Naive thymus-derived CD4-positive, alpha-beta T cell (primary cell): ENCODE measurements at regions of chr2 and their contacts with region 1.

Region 1: GRCh38 chr2:85354286-85355072 is at the starts of genes ELMOD3 and RETSAT:
- DNase-seq: peak; percentile 79 to 99 (median 98)
- ATAC-seq: peak; percentile 99
- H3K4me3 ChIP-seq: peak within 1 kb of the TSS; percentile 86
- H3K4me3 Mint-ChIP-seq: peak within 1 kb of the TSS; percentile 91 to 100 (median 100)
- H3K27ac ChIP-seq: peak within 1 kb of the TSS; percentile 89
- H3K27ac Mint-ChIP-seq: peak within 1 kb of the TSS; percentile 93 to 100 (median 99)
- H3K4me1 ChIP-seq: peaks cover 19 to 28% of the 10 kb centered on the region in 2 donors
- H3K4me1 Mint-ChIP-seq: peaks cover 36 to 61% (median 53%) of the 10 kb centered on the region in 7 donors
- H3K27me3 ChIP-seq: no peaks in the 10 kb centered on the region
- H3K27me3 Mint-ChIP-seq: no peaks in the 10 kb centered on the region
- total RNA-seq, gene ELMOD3: 20.2 to 33.3 (median 21.7) TPM
- total RNA-seq, gene RETSAT: 18.5 to 30.5 (median 20.2) TPM

Region 2: GRCh38 chr2:84459018-84459943 is 895.2 kb before region 1 on chr2 and contains the start of gene SUCLG1:
- CTCF ChIA-PET with region 1: no interaction called
- POLR2A ChIA-PET with region 1: no interaction called
- intact Hi-C with region 1: loop called in 1 of 2 experiments (anchors 1 kb)
- DNase-seq: peak; percentile 72 to 88 (median 84)
- ATAC-seq: peak; percentile 98
- H3K4me3 ChIP-seq: peak within 1 kb of the TSS; percentile 69
- H3K4me3 Mint-ChIP-seq: peak within 1 kb of the TSS; percentile 90 to 100 (median 96)
- H3K27ac ChIP-seq: peak within 1 kb of the TSS; percentile 94
- H3K27ac Mint-ChIP-seq: peak within 1 kb of the TSS; percentile 91 to 99 (median 99)
- H3K4me1 ChIP-seq: peaks cover 9 to 24% of the 10 kb centered on the region in 2 donors
- H3K4me1 Mint-ChIP-seq: peaks cover 33 to 56% (median 50%) of the 10 kb centered on the region in 7 donors
- H3K27me3 ChIP-seq: no peaks in the 10 kb centered on the region
- H3K27me3 Mint-ChIP-seq: no peaks in the 10 kb centered on the region
- total RNA-seq, gene SUCLG1: 45.1 to 63.6 (median 47.9) TPM

Region 3: GRCh38 chr2:85318222-85319074 is 36.0 kb before region 1 on chr2:
- CTCF ChIA-PET with region 1: no interaction called
- POLR2A ChIA-PET with region 1: interaction called, 211 read pairs
- intact Hi-C with region 1: no loop called
- DNase-seq: peak in 2 of 9 donors; percentile 33 to 37
- ATAC-seq: peak; percentile 64
- H3K4me3 ChIP-seq: no peak overlapping the region
- H3K4me3 Mint-ChIP-seq: peak overlapping the region; percentile 13 to 100 (median 60)
- H3K27ac ChIP-seq: peak overlapping the region; percentile 40
- H3K27ac Mint-ChIP-seq: peak overlapping the region in 8 of 9 donors; percentile 61 to 100 (median 90)
- H3K4me1 ChIP-seq: peaks cover 51 to 54% of the 10 kb centered on the region in 2 donors
- H3K4me1 Mint-ChIP-seq: peaks cover 53 to 66% (median 61%) of the 10 kb centered on the region in 7 donors
- H3K27me3 ChIP-seq: no peaks in the 10 kb centered on the region
- H3K27me3 Mint-ChIP-seq: no peaks in the 10 kb centered on the region

Region 4: GRCh38 chr2:85409845-85410583 is 55.5 kb after region 1 on chr2 and contains the start of gene CAPG:
- CTCF ChIA-PET with region 1: no interaction called
- POLR2A ChIA-PET with region 1: interaction called, 4 read pairs
- intact Hi-C with region 1: loop called in 1 of 2 experiments (anchors 1 kb)
- DNase-seq: peak in 3 of 9 donors; percentile 27 to 59 (median 29)
- ATAC-seq: peak; percentile 60
- H3K4me3 ChIP-seq: peak within 1 kb of the TSS; percentile 63
- H3K4me3 Mint-ChIP-seq: peak within 1 kb of the TSS; percentile 66 to 94 (median 78)
- H3K27ac ChIP-seq: peak within 1 kb of the TSS; percentile 41
- H3K27ac Mint-ChIP-seq: peak within 1 kb of the TSS; percentile 33 to 81 (median 76)
- H3K4me1 ChIP-seq: peaks cover 30 to 55% of the 10 kb centered on the region in 2 donors
- H3K4me1 Mint-ChIP-seq: peaks cover 32 to 78% (median 56%) of the 10 kb centered on the region in 7 donors
- H3K27me3 ChIP-seq: no peaks in the 10 kb centered on the region
- H3K27me3 Mint-ChIP-seq: peaks cover 0 to 15% (median 0%) of the 10 kb centered on the region in 5 donors
- total RNA-seq, gene CAPG: 12.9 to 265 (median 29.7) TPM

Region 5: DNA sequence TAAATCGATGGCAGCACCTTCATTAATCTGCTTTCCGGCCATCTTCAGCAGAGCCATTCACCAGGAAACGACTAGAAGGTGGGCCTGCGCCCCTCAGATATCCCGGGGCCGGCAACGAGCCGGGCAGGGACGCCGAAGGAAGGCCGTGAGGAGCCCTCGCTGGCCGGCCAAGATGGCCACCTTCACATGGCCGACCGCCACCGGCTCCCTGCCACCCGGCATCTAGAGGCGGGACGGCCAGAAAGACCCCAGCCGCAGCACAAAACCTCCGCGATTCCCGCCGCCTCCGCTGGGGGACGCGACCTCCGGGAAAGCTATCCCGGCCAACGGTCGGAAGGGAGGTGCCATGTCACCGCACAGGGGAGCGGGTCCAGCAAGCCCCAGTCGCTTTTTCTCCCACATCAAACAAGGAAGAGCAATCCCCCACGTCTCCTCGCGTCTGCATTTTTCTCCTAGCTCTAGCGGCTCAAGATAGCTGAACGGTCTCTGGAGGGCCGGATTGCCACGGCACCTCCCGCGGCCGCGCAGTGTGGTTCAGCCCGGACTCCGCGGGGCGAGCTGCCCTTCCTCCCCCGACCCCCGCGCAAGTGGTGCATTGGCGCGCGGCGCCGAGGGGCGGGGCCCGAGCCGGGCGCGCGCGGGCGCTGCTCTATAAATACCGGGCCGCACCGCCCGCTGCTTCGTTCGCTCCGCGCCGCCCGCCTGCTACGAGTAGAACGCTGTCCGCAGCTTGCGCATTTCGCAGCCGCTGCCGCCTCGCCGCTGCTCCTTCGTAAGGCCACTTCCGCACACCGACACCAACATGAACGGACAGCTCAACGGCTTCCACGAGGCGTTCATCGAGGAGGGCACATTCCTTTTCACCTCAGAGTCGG is 184.2 kb after region 1 on chr2 and contains the start of gene MAT2A:
- CTCF ChIA-PET with region 1: no interaction called
- POLR2A ChIA-PET with region 1: interaction called, 38 read pairs
- intact Hi-C with region 1: loop called (anchors 1 kb)
- DNase-seq: peak; percentile 72 to 96 (median 88)
- ATAC-seq: peak; percentile 87
- H3K4me3 ChIP-seq: peak within 1 kb of the TSS; percentile 92
- H3K4me3 Mint-ChIP-seq: peak within 1 kb of the TSS; percentile 91 to 98 (median 95)
- H3K27ac ChIP-seq: peak within 1 kb of the TSS; percentile 84
- H3K27ac Mint-ChIP-seq: peak within 1 kb of the TSS; percentile 90 to 97 (median 94)
- H3K4me1 ChIP-seq: peaks cover 19 to 27% of the 10 kb centered on the region in 2 donors
- H3K4me1 Mint-ChIP-seq: peaks cover 14 to 58% (median 47%) of the 10 kb centered on the region in 7 donors
- H3K27me3 ChIP-seq: no peaks in the 10 kb centered on the region
- H3K27me3 Mint-ChIP-seq: no peaks in the 10 kb centered on the region
- total RNA-seq, gene MAT2A: 96.3 to 268 (median 178) TPM

Region 6: DNA sequence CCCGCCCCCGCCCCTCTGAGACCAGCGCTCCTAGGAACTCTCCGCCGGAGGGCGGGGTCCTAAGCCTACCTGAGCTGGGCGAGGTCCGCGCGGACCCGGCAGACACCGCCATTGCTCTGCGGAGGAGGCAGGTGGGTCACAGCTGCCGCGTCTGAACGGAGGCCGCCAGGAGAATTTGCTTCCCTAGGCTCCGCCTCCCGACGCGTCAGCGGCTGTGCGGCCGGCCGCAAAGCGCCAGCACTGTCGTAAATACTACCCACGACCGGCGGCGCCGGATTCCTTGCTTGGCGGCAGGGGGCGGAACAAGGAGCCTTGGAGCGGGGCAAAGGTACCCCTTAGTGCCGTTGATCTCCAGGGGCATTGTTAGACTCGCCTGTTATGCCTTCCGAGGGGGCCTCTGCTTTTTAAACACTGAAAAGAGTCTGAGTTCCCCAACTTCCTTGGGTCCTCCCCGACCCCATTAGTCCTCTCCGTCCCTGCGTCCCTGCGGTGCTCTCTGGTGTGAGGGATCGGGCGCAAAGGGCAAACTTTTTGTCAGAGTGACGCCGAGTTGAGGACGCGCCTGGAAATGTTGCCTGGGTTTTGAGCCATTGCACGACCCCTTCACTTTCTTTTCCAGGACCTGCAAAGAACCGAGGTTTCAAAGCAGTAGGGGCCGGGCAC is 207.0 kb after region 1 on chr2 and contains the start of gene GGCX:
- CTCF ChIA-PET with region 1: no interaction called
- POLR2A ChIA-PET with region 1: interaction called, 5 read pairs
- intact Hi-C with region 1: loop called (anchors 1 kb)
- DNase-seq: peak; percentile 77 to 92 (median 88)
- ATAC-seq: peak; percentile 98
- H3K4me3 ChIP-seq: peak within 1 kb of the TSS; percentile 98
- H3K4me3 Mint-ChIP-seq: peak within 1 kb of the TSS; percentile 81 to 99 (median 97)
- H3K27ac ChIP-seq: peak within 1 kb of the TSS; percentile 95
- H3K27ac Mint-ChIP-seq: peak within 1 kb of the TSS; percentile 86 to 99 (median 95)
- H3K4me1 ChIP-seq: peaks cover 6 to 8% of the 10 kb centered on the region in 2 donors
- H3K4me1 Mint-ChIP-seq: peaks cover 17 to 48% (median 32%) of the 10 kb centered on the region in 7 donors
- H3K27me3 ChIP-seq: no peaks in the 10 kb centered on the region
- H3K27me3 Mint-ChIP-seq: no peaks in the 10 kb centered on the region
- total RNA-seq, gene GGCX: 20.4 to 34.2 (median 26.3) TPM

Region 7: GRCh38 chr2:86000131-86000937 is 645.9 kb after region 1 on chr2:
- CTCF ChIA-PET with region 1: no interaction called
- POLR2A ChIA-PET with region 1: no interaction called
- intact Hi-C with region 1: no loop called
- DNase-seq: no peak
- ATAC-seq: no peak
- H3K4me3 ChIP-seq: no peak overlapping the region
- H3K4me3 Mint-ChIP-seq: peak overlapping the region; percentile 18 to 81 (median 62)
- H3K27ac ChIP-seq: no peak overlapping the region
- H3K27ac Mint-ChIP-seq: peak overlapping the region; percentile 85 to 96 (median 93)
- H3K4me1 ChIP-seq: peaks cover 37 to 44% of the 10 kb centered on the region in 2 donors
- H3K4me1 Mint-ChIP-seq: peaks cover 31 to 71% (median 55%) of the 10 kb centered on the region in 7 donors
- H3K27me3 ChIP-seq: no peaks in the 10 kb centered on the region
- H3K27me3 Mint-ChIP-seq: peaks cover 0 to 4% (median 0%) of the 10 kb centered on the region in 5 donors

Region 8: GRCh38 chr2:86185517-86186212 is 831.2 kb after region 1 on chr2:
- CTCF ChIA-PET with region 1: no interaction called
- POLR2A ChIA-PET with region 1: no interaction called
- intact Hi-C with region 1: no loop called
- DNase-seq: peak in 7 of 9 donors; percentile 27 to 53 (median 46)
- ATAC-seq: peak; percentile 76
- H3K4me3 ChIP-seq: peak overlapping the region; percentile 2
- H3K4me3 Mint-ChIP-seq: peak overlapping the region; percentile 73 to 89 (median 78)
- H3K27ac ChIP-seq: peak overlapping the region; percentile 74
- H3K27ac Mint-ChIP-seq: peak overlapping the region; percentile 83 to 97 (median 90)
- H3K4me1 ChIP-seq: peaks cover 38 to 40% of the 10 kb centered on the region in 2 donors
- H3K4me1 Mint-ChIP-seq: peaks cover 49 to 89% (median 78%) of the 10 kb centered on the region in 7 donors
- H3K27me3 ChIP-seq: no peaks in the 10 kb centered on the region
- H3K27me3 Mint-ChIP-seq: no peaks in the 10 kb centered on the region